ENCODE measurements at regions of chr14 and their contacts with region 1.

Region 1: DNA sequence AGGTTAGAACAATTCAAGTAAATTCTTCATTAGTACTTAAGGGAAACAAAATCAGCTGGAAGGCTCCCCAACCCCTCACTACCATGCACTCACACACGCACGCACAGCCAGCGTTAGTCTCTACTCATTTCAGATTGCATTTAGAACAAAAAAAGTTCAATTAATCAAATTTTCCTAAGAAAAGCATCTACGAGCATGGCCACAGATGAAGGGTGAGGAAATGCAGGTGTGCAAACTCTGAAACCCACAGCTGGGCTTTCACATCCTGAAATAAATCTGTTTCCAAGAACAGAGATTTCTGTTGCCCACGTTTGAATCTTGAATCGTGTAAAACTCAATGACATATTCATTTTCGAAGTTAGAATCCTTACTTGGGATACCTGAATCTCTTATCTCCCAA is 62.6 kb downstream of the SEL1L start:
- DNase-seq: no peak
- ATAC-seq: peak; percentile 31
- H3K4me3 ChIP-seq: peak overlapping the region; percentile 36; the same call in 1 of the 2 replicates
- H3K27ac ChIP-seq: peak overlapping the region; percentile 97
- H3K4me1 ChIP-seq: peaks cover 54% of the 10 kb centered on the region
- H3K27me3 ChIP-seq: no peaks in the 10 kb centered on the region
- CTCF ChIP-seq: no peak
- EP300 ChIP-seq: peak; percentile 44 to 76; a peak in 2 of 4 replicates
- POLR2A ChIP-seq: no peak
- RAD21 ChIP-seq: no peak

Region 2: DNA sequence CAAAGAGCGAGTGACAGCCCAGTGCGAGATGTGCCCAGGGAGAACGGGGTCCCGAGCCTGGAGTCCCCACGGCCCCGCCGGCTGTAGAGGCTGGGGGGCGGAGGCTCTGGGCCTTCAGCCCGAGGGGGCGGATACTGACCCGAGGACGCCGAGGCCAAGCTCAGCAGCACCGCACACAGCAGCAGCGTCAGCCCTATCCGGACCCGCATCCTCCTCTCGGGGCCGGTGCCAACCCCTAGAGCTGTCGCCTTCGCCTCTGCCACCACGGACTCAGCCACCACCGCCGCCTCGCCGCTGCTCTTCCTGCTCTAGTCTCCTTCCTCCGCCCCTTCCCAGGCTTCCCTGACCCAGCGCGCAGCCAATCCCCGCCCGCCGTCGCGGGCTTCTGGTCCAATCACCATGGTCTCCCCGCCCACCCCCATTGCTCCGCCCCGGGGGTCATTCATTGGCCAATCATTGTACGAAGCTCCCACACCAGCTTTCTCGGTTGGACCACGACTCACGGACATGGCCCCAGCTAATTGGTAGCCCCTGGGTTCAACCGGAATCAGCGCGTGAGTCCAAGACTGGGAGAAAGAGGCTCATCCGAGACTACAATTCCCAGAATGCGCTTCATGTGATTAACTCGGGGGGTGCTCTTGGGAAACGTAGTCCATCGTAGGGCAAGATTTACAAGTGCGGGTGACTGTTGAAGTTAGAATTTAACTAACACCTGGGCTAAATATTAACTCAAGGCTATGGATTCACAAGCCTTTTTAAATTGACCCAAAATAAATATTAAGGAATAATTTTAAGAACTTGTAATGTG is 62.7 kb after region 1 on chr14 and contains the start of gene SEL1L:
- CTCF ChIA-PET with region 1: no interaction called
- POLR2A ChIA-PET with region 1: interaction called, 3 read pairs
- RAD21 ChIA-PET with region 1: interaction called, 3 read pairs
- SMC1A ChIA-PET with region 1: interaction called, 9 read pairs
- in situ Hi-C with region 1: no loop called
- intact Hi-C with region 1: loop called (anchors 2 kb)
- DNase-seq: peak; percentile 99
- ATAC-seq: peak; percentile 95
- H3K4me3 ChIP-seq: peak within 1 kb of the TSS; percentile 92
- H3K27ac ChIP-seq: peak within 1 kb of the TSS; percentile 80
- H3K4me1 ChIP-seq: peaks cover 20% of the 10 kb centered on the region
- H3K27me3 ChIP-seq: no peaks in the 10 kb centered on the region
- CTCF ChIP-seq: no peak
- EP300 ChIP-seq: no peak
- POLR2A ChIP-seq: peak; percentile 99
- RAD21 ChIP-seq: no peak
- polyA plus RNA-seq, gene SEL1L: 13.4 to 20.1 TPM